ENCODE measurements at regions of chr11 and their contacts with region 1.

Region 1: DNA sequence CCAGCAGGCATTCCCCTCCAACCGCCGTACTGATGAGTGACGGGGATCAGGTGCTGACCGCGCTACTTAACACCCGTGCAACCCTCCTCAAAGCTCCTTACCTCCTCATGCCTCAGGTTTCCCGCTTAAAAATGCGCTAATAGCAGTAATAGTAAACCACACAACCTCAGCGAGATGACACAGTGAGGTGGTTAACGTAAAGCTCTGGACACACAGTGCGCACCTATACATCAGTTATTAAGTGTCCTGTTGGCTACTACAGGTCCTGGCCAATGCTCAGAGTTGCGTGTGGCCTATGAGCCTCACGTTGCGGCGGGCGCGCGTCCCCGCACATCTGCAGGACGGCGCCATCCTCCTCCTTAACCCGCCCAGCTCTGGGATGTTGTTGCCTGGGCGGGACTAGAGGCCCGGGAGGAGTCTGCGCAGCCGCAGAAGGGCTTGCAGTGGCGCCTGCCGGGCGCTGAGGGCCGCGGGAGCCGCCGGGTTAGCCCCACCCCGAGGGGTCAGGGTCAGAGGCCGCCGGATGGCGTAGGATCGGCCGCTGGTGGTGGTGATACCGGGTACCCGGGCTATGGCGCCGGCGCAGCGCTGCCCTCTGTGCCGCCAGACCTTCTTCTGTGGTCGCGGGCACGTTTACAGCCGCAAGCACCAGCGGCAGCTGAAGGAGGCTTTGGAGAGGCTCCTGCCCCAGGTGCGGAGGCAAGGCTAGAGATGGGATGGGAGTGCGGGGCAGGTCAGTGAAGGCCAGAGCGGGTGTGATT is at the start of gene CENATAC:
- DNase-seq: peak; percentile 97 to 100 (median 98)

Region 2: GRCh38 chr11:119018074-119018938 is 20.5 kb after region 1 on chr11 and contains the starts of genes RPS25 and TRAPPC4:
- intact Hi-C with region 1: loop called (anchors 1 kb)
- DNase-seq: peak; percentile 97 to 100 (median 98)

Measured in posterior cingulate gyrus (tissue), 11 donors.